Posterior vena cava (tissue), 2 donors: ENCODE measurements at regions of chr2 and their contacts with region 1.

Region 1: GRCh38 chr2:148430101-148430500 is 214.4 kb upstream of the EPC2 start:
- DNase-seq: no peak

Region 2: DNA sequence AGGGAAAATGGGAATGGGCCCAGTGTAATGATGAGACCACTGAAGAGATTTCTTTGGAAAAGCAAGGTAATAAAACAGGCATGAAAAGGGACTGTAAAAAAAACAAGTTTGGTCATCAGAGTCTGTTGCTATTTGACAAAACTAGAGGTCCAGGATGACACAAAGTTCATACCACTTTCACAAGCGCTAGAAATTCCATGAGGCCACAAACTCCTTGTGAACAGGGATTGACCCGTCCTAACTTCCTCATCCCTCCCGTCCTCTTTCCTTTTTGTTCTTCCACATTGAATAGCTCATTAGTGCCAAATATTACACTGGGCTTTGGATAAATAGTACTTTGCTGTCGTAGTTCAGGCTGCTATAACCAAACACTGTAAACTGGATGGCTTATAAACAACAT is 25.7 kb after region 1 on chr2:
- intact Hi-C with region 1: loop called in 1 of 2 experiments (anchors 2 kb)
- DNase-seq: no peak